Head of caudate nucleus (tissue), 42 donors: ENCODE measurements at regions of chrX and their contacts with region 1.

Region 1: GRCh38 chrX:129606918-129607317 is 47.8 kb downstream of the APLN start:
- DNase-seq: peak in 40 of 42 donors; percentile 9 to 86 (median 67)

Region 2: GRCh38 chrX:128717635-128718578 is 889.0 kb before region 1 on chrX:
- intact Hi-C with region 1: no loop called
- DNase-seq: no peak

Region 3: GRCh38 chrX:129726307-129727111 is 119.6 kb after region 1 on chrX:
- intact Hi-C with region 1: loop called (anchors 10 kb)
- DNase-seq: peak; percentile 41 to 88 (median 77)

Region 4: DNA sequence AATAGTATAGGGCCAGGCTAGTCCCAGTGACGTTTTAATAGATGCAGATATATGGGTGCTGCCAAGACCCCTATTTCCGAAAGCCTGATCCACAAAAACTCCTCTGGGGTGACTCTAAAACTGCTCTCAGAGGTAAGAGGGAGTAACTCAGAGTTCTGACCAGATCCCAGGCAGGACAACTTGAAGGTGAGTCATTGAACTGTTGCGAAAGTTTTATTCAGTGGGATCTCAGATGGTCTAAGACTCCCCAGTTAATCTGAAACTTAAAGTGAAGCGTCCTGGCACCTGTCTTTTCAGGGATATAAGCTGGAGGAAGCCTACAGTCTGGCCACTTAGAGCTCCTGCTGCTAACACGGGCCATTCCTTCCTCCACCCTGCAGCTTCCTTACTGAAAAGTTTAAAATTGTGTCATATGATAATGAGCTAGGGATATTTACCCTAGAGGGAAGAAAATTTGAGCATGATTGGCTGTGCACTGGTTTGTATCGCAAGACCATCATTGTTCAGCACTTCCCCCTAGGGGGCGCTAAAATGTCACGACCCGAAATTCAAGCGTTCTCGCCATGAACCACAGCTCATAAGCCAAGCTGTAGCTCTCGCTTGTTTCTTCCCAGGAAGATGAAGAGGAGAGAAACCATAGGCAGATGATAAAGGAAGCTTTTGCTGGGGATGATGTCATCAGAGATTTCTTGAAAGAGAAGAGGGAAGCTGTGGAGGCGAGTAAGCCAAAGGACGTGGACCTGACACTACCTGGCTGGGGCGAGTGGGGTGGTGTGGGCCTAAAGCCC is 318.6 kb after region 1 on chrX:
- intact Hi-C with region 1: loop called (anchors 10 kb)
- DNase-seq: peak; percentile 47 to 90 (median 79)

Region 5: GRCh38 chrX:130055103-130055502 is 448.2 kb after region 1 on chrX:
- intact Hi-C with region 1: loop called (anchors 5 kb)
- DNase-seq: no peak

Region 6: DNA sequence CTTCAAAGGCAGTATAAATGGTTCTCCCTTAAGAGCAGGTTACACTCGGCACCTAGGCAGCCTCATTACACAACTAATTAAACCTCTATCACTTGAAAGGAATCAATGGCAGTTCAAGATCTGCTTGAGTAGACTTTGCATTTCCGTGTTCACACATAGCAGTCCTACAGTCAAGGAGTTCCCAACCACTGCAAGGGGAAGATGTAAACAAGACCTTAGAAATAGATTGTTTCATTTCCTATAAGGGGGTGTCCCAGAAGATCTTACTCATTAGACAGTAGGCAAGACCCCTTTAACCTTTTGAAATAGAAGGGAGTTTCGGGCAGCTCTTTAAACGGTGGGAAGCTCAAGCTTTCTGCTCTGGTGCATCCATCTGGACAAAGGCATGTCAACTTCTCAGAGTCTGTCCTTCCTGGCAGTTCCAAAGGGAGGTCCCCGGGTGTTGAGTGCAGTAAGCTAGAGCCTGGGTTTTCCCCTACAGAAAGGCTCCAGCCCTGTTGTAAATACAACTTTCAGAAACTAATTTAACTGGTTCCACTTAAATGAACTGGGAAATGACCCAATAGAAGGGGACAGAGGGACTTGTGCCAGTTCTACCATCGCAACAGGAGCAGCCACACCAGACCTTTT is 945.6 kb after region 1 on chrX:
- intact Hi-C with region 1: no loop called
- DNase-seq: no peak